ENCODE measurements at regions of chr3 and their contacts with region 1.

Region 1: GRCh38 chr3:161371430-161372326 is at the start of gene SPTSSB:
- DNase-seq: peak; percentile 32
- H3K4me3 ChIP-seq: peak within 1 kb of the TSS in 2 of 3 experiments; percentile 33 to 35
- H3K27ac ChIP-seq: no peak within 1 kb of the TSS
- H3K4me1 ChIP-seq: peaks cover 8% of the 10 kb centered on the region
- H3K27me3 ChIP-seq: peaks cover 30 to 36% of the 10 kb centered on the region in 2 experiments
- CTCF ChIP-seq: peak in 1 of 2 donors; percentile 43
- POLR2A ChIP-seq: no peak
- total RNA-seq, gene SPTSSB: not detected in 2 replicates

Region 2: GRCh38 chr3:161314836-161315401 is 56.8 kb before region 1 on chr3:
- CTCF ChIA-PET with region 1: interaction called, 5 read pairs
- POLR2A ChIA-PET with region 1: no interaction called
- dilution Hi-C with region 1: no loop called
- intact Hi-C with region 1: loop called (anchors 2 kb)
- DNase-seq: peak; percentile 10
- H3K4me3 ChIP-seq: no peak overlapping the region
- H3K27ac ChIP-seq: peak overlapping the region; percentile 84
- H3K4me1 ChIP-seq: peaks cover 23% of the 10 kb centered on the region
- H3K27me3 ChIP-seq: no peaks in the 10 kb centered on the region
- CTCF ChIP-seq: no peak
- POLR2A ChIP-seq: no peak

Region 3: DNA sequence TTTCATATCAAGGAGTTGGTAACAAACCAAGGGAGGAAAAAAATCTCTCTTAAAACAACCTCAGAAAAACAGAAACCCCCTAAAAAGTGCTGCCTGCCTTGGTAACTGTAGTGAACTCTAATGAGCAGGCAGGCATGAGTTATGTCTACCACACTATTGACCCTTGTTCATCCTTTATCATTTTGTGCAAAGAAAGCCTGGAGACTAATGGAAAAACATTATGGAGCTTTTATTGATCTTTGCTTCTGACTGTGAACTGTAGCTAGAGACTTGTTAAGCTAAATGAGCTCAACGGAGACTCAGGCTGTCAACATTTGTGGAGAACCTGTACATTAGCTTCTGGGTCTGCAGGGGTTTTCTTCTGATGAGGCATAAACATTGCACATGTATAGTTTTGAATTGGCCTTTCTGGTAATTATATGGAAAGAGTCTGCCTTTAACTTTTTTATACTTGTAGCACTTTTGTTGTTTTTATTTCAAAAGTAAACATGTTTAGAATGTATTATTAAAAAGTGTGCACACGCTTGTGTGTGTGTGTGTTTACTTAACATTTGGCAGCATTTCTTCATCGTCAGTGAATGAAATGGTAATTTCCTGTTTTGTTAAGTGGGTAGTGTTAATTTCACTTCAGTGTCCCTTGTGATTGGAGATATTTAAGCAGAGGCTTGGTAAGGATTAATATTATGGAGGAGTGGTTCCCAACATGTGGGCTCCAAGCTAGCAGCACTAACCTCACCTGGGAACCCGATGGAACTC is 15.5 kb after region 1 on chr3:
- CTCF ChIA-PET with region 1: interaction called, 11 read pairs
- POLR2A ChIA-PET with region 1: no interaction called
- dilution Hi-C with region 1: no loop called
- intact Hi-C with region 1: no loop called
- DNase-seq: no peak
- H3K4me3 ChIP-seq: no peak overlapping the region
- H3K27ac ChIP-seq: no peak overlapping the region
- H3K4me1 ChIP-seq: no peaks in the 10 kb centered on the region
- H3K27me3 ChIP-seq: peaks cover 0 to 13% of the 10 kb centered on the region in 2 experiments
- CTCF ChIP-seq: no peak
- POLR2A ChIP-seq: no peak